ENCODE measurements at regions of chr12 and their contacts with region 1.

Region 1: DNA sequence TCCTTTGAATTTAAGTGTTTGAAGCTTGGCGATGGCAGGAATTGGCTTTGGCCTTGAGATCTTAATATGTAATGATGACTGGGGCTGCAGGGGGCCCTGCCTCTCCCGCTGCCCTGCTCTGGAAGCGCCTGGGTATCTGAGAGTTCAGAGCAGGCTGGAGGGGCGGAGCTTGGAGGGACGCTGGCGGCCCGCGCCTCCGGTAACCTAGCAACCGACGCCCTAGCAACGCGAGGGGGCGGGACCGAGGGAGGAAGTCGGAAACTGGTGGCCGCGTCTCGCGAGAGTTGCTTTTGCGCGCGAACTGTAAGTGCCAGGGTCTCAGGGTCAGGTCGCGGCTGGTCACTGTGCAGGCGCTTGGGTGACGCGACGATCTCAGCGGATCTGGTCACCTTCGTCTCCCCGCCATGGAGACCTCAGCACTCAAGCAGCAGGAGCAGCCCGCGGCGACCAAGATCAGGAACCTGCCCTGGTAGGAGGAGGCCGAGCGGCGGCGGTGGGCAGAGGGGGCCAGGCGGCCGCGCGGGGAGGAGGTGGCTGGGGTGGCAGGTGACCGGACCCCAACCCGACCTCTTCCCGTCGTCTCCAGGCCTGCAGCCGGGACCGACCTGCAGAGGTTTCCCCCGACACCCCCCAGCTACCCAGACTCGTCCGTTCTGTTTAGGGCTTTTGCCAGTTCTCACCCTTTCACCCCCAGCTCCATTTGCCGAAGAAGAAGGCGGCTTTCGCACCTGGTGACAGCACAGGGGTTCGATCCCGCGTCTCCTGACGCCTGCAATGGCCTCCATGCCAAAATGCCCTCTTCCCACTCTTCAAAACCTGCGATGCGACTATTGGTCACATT is at the start of gene RFC5:
- DNase-seq: peak; percentile 93 to 98 (median 97)
- ATAC-seq: peak; percentile 99
- H3K4me3 ChIP-seq: peak within 1 kb of the TSS; percentile 80
- H3K4me3 Mint-ChIP-seq: peak within 1 kb of the TSS; percentile 89 to 95 (median 92)
- H3K27ac ChIP-seq: peak within 1 kb of the TSS; percentile 69
- H3K27ac Mint-ChIP-seq: peak within 1 kb of the TSS; percentile 82 to 95 (median 92)
- H3K4me1 ChIP-seq: peaks cover 10 to 13% of the 10 kb centered on the region in 2 donors
- H3K4me1 Mint-ChIP-seq: peaks cover 11 to 29% (median 18%) of the 10 kb centered on the region in 7 donors
- H3K27me3 ChIP-seq: no peaks in the 10 kb centered on the region
- H3K27me3 Mint-ChIP-seq: peaks cover 0 to 7% (median 0%) of the 10 kb centered on the region in 5 donors
- total RNA-seq, gene RFC5: 6.3 to 40.3 (median 15.6) TPM

Region 2: DNA sequence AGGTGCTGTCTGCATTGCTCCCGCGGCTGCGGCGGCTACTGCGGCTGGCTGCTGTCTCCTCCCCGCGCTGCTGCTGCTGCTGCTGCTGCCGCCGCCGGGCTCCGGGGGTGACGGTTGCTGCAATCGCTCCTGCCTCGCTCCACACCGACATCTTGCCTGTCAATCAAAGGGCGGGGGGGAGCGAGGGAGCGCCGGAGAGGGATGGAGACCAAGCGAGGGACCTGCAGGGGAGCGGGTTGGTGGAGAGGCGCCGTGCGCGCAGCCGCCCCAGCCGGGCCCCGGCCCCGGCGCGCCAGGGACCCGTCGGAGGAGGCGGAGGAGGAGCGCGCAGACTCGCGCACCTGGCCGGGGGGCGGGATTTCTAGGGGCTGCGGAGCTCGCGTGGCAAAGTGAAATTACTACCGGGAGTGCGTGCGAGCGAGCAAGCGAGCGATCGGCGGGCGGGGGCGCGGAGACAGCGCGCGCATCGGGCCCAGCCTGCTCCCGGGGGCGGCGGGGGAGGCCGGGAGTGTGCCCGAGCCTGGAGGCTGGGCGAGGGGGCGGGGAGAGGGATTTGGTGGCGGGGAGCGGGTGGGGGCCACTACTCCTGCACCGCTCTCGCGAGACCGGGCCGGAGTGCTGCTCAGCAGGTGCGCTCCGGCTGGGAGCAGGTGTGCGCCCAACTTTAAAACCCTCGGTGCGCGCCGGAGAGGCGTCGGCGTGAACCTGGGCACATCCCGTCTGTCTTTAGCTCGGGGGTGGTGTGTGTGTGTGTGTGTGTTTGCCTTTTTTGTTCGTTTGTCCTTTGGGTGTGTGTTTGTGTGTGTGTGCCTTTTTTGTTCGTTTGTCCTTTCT is 47.6 kb before region 1 on chr12 and contains the start of gene KSR2:
- CTCF ChIA-PET with region 1: no interaction called
- POLR2A ChIA-PET with region 1: no interaction called
- intact Hi-C with region 1: loop called in 1 of 2 experiments (anchors 2 kb)
- DNase-seq: peak in 8 of 9 donors; percentile 5 to 59 (median 16)
- ATAC-seq: peak; percentile 68
- H3K4me3 ChIP-seq: no peak within 1 kb of the TSS
- H3K4me3 Mint-ChIP-seq: peak within 1 kb of the TSS; percentile 72 to 90 (median 82)
- H3K27ac ChIP-seq: no peak within 1 kb of the TSS
- H3K27ac Mint-ChIP-seq: peak within 1 kb of the TSS in 1 of 9 donors; percentile 31
- H3K4me1 ChIP-seq: no peaks in the 10 kb centered on the region
- H3K4me1 Mint-ChIP-seq: peaks cover 0 to 21% (median 10%) of the 10 kb centered on the region in 7 donors
- H3K27me3 ChIP-seq: no peaks in the 10 kb centered on the region
- H3K27me3 Mint-ChIP-seq: peaks cover 57 to 75% (median 65%) of the 10 kb centered on the region in 5 donors
- total RNA-seq, gene KSR2: 0.03 to 0.07 TPM in 2 of 5 experiments, not detected in the others

Region 3: GRCh38 chr12:118034429-118035215 is 18.0 kb after region 1 on chr12:
- CTCF ChIA-PET with region 1: no interaction called
- POLR2A ChIA-PET with region 1: interaction called, 3 read pairs
- intact Hi-C with region 1: loop called in 1 of 2 experiments (anchors 2 kb)
- DNase-seq: no peak
- ATAC-seq: no peak
- H3K4me3 ChIP-seq: no peak overlapping the region
- H3K4me3 Mint-ChIP-seq: no peak overlapping the region
- H3K27ac ChIP-seq: no peak overlapping the region
- H3K27ac Mint-ChIP-seq: peak overlapping the region in 6 of 9 donors; percentile 3 to 65 (median 60)
- H3K4me1 ChIP-seq: no peaks in the 10 kb centered on the region
- H3K4me1 Mint-ChIP-seq: peaks cover 0 to 28% (median 0%) of the 10 kb centered on the region in 7 donors
- H3K27me3 ChIP-seq: no peaks in the 10 kb centered on the region
- H3K27me3 Mint-ChIP-seq: no peaks in the 10 kb centered on the region

Region 4: DNA sequence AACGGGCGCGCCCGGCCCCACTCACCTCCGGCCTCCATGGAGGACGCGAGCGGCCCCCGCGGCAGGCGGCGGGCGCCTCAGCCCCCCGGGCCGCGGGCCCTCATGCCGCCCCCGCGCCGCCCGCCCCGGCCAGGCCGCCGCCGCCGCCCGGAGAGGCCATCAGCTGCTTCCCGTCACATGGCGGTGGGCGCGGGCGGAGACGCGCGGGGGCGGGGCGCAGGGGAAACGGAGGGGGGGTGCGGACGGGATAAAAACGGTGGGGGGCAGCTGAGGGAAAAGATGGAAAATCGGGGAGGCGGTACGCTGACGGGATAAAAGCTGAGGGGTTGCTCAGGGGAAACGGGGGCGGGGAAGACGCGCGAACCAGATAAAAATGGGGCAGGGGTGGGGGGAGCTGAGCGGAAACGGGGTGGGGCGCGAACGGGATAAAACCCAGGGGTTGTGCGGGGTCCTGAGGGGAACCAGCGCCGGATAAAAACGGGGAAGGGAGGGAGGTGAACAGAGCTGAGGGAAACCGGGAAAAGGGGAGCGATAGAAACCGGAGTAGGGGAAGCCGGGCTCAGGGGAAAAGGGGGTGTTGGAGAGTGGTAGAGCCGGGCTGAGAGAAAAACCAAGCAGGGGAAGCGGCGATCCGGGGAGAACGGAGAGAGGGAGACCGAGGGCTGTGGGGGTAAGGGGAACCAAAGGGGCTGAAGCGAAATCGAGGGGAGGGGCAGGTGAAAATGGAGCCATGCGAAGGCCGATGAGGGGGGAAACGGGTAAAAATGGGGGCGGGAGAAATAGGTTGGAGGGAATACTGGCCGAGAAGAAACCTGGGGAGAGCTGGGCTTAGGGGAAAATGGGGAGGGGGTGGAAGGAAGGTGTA is 44.6 kb after region 1 on chr12 and contains the start of gene WSB2:
- CTCF ChIA-PET with region 1: interaction called, 3 read pairs
- POLR2A ChIA-PET with region 1: interaction called, 9 read pairs
- intact Hi-C with region 1: loop called (anchors 1 kb)
- DNase-seq: peak; percentile 24 to 81 (median 39)
- ATAC-seq: peak; percentile 53
- H3K4me3 ChIP-seq: peak within 1 kb of the TSS; percentile 88
- H3K4me3 Mint-ChIP-seq: peak within 1 kb of the TSS; percentile 88 to 100 (median 96)
- H3K27ac ChIP-seq: peak within 1 kb of the TSS; percentile 80
- H3K27ac Mint-ChIP-seq: peak within 1 kb of the TSS; percentile 92 to 98 (median 94)
- H3K4me1 ChIP-seq: peaks cover 13 to 32% of the 10 kb centered on the region in 2 donors
- H3K4me1 Mint-ChIP-seq: peaks cover 44 to 65% (median 57%) of the 10 kb centered on the region in 7 donors
- H3K27me3 ChIP-seq: no peaks in the 10 kb centered on the region
- H3K27me3 Mint-ChIP-seq: no peaks in the 10 kb centered on the region
- total RNA-seq, gene WSB2: 12.2 to 52.2 (median 19.1) TPM

Measured in naive thymus-derived CD4-positive, alpha-beta T cell (primary cell).